ENCODE measurements at regions of chr7 and their contacts with region 1.

Region 1: DNA sequence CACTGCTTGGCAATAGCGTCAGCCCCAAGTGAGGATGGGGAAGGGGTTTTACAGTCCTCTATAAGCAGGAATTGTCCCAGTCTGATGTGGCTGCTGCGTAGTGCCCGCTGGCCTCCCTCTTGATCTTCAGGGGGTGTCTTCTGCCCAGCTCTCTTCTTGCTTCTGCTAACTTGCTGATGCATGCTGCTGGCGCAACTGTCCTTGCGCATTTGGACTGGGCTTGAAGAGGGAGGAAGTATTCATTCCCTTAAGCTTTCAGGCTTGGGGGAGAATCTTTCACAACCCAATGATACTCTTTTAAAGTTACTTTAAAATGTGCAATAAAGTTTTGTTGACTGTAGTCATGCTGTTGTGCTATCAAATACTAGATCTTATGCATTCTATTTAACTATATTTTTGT is 10.3 kb downstream of the GALNT11 start:
- DNase-seq: no peak
- H3K4me3 ChIP-seq: no peak overlapping the region
- H3K27ac ChIP-seq: no peak overlapping the region
- H3K4me1 ChIP-seq: no peaks in the 10 kb centered on the region
- CTCF ChIP-seq: no peak

Region 2: DNA sequence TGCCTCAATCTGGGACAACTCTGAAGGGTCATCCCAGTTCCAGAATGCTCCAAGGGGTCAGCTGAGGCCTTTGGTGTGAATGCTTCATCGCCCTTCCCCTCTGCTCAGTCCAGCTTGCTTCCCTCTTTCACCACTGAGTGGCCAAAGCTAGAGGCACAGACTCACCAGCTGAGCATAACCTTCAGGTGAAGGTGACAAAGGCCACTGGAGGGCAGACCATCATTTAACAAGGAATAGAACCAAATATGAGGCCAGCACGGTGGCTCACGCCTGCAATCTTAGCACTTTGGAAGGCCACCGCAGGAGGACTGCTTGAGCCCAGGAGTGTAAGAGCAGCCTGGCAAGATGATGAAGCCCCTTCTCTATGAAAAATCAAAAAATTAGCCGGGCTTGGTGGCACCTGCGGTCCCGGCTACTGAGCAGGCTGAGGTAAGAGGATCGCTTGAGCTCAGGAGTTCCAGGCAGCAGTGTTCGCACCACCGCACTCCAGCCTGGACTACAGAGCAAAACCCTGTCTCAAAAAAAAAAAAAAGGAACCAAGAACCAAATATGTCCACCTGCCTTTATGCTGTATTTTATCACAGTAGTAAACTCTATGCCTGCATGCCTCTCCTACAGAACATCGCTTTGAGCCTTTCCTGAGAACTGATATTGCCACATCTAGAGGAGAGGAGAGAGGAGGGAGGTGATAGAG is 172.3 kb before region 1 on chr7:
- CTCF ChIA-PET with region 1: no interaction called
- POLR2A ChIA-PET with region 1: no interaction called
- intact Hi-C with region 1: loop called (anchors 10 kb)
- DNase-seq: peak; percentile 31
- H3K4me3 ChIP-seq: no peak overlapping the region
- H3K27ac ChIP-seq: no peak overlapping the region
- H3K4me1 ChIP-seq: peaks cover 3% of the 10 kb centered on the region
- CTCF ChIP-seq: peak; percentile 38

Region 3: DNA sequence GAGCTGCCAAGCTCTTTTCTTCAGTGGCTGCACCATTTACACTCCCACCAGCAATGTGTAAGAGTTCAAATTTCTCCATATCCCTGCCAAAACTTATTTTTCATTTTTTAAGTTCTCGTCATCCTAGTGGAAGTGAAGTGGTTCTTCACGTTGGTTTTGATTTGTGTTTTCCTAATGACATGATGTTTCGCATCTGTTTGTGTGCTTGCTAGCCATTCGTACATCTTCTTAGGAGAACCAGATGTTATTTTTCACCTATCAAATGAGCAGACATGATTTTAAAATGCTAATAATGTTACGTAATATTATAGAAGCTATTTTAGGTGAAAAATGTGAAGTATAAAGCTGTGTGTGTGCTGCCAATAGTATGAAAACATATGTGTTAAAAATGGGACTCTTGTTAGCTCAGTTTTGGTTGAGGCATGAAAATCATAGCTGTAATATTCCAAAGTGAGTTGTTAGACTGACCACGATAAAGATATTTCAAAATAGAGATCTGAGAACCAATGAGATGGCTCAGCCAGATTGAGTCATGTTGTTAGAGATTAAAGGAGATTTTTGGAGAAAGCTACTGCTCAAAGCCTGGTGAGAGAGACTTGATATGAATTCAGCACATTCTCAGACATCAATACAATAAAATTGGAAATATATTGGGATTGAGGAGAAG is 36.3 kb before region 1 on chr7:
- CTCF ChIA-PET with region 1: no interaction called
- POLR2A ChIA-PET with region 1: no interaction called
- intact Hi-C with region 1: no loop called
- DNase-seq: no peak
- H3K4me3 ChIP-seq: no peak overlapping the region
- H3K27ac ChIP-seq: no peak overlapping the region
- H3K4me1 ChIP-seq: no peaks in the 10 kb centered on the region
- CTCF ChIP-seq: no peak